ENCODE measurements at regions of chr9 and their contacts with region 1.

Region 1: DNA sequence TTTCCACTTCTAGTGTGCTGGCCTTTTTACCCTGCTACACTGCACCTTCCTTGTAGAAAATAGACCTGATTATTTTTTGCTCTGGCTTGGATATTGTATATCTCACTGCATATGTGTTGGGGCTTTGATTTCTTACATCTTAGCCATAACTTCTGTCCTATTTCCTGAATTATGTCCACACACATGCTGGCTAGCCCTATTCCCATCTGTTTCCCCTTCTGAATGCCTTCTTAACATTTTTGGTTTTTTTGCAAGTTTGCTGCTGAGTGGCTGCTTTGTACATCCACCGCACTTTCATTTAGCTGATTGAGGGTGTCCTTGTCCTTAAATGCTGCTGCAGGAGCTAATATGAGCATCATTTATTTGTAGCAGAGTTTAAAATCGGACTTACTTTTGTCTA is 26.9 kb downstream of the CFAP95 start:
- DNase-seq: no peak
- ATAC-seq: no peak
- H3K4me3 ChIP-seq: no peak overlapping the region
- H3K27ac ChIP-seq: no peak overlapping the region
- H3K4me1 ChIP-seq: no peaks in the 10 kb centered on the region
- H3K27me3 ChIP-seq: peaks cover 0 to 15% (median 4%) of the 10 kb centered on the region in 7 donors
- CTCF ChIP-seq: no peak

Region 2: DNA sequence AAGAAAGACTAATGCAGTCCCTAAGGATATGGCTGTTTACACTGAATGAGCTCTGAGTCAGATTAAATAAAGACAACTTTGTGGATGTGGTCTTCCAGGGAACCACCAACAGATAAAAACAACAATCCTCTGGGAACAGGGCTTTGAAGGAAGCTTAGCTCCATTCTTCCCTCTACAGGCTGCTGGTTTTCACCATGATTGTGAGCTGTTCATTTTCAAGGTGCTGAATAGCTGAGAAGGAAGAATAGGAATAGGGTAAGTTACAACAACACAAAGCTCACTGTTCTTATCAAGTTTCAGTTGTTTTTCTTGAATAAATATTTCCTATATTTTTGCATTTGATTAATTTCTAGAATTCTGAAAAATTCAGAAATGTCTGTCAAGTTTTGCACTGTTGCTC is 61.7 kb before region 1 on chr9:
- intact Hi-C with region 1: loop called in 2 of 10 experiments (anchors 10 kb)
- DNase-seq: no peak
- ATAC-seq: no peak
- H3K4me3 ChIP-seq: no peak overlapping the region
- H3K27ac ChIP-seq: no peak overlapping the region
- H3K4me1 ChIP-seq: no peaks in the 10 kb centered on the region
- H3K27me3 ChIP-seq: peaks cover 0 to 14% (median 5%) of the 10 kb centered on the region in 7 donors
- CTCF ChIP-seq: peak in 1 of 9 donors; percentile 11

Measured in heart right ventricle (tissue), 16 donors.